Activated CD4-positive, alpha-beta T cell treated with anti-CD3 and anti-CD28 coated beads for 36 hours (primary cell): ENCODE measurements at regions of chr12 and their contacts with region 1.

Region 1: DNA sequence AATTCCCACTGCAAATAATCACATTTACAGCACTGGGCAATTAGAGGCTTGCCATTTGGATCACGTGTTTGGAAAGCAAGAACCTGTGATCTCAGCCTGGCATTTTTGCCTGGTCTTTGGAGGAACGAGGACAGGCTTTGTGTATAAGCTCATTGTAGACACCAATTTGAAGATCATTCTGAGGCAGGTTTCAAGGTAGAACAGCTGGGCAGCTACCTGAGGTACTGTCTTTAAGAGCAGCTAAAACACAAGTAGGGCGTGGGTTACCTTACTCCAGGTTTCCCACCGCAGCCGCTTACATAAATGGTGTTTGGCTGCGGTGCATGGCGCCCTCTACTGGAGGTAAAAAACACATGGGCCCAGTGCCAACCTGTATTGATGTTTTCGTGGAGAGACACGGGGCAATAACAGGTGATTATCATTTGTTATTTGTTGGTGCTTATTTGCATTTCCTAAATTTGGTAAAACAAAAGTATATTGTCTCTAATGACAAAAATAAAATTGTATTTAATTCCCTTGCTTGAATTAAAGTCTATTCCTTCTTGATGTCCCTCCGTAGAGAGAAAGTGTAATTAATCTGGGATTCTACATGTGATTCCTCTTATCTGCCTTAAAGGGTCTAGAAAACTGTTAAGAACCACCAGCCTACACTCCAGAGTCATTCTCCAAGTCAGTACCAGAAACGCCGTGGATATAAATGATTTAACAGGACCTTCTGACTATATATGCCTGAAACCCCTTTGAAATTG is 69.7 kb downstream of the SVOP start:
- DNase-seq: peak; percentile 83
- ATAC-seq: peak; percentile 84
- H3K4me3 Mint-ChIP-seq: no peak overlapping the region
- H3K27ac Mint-ChIP-seq: no peak overlapping the region
- H3K4me1 Mint-ChIP-seq: peaks cover 2% of the 10 kb centered on the region
- H3K27me3 Mint-ChIP-seq: peaks cover 8% of the 10 kb centered on the region

Region 2: DNA sequence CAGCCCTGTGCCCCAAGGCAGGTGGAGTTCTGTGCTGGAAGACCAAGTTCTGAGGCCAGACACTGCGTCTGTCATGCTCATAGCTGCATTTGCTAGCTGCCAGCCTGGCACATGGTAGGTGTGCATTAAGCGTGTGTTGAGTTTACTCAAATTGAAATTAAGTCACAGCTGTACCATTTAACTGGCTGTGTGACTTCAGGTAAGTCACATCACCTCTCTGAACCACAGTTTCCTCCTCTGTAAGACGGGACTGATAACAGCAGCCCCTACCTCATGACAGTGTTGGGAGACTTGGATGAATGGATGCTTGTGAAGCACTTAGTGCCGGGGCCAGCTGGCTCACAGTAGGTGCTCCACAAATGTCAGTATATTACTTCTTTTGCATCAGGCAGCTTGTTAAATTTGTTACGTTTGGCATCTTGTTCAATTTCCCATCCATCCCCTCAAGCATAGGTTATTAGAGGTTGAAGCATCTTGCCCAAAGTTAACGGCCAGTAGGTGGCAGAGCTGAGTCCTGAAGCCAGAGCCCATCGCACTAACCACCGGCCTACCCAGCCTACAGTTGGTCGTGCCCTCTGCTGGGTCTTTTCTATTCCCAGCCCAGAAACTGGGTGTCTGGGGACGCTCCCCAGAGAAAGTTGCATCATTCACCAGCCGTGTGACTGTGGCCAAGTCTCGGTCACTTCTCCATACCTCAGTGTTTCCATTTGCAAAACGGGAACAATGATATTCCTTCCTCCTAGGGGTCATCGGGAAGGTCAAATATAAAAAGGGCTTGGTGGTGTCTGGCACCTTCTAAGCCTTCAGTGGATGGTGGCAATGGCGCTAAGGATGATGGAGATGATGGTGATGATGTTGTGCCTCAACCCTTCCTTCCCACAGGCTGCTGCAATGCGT is 66.8 kb before region 1 on chr12:
- CTCF ChIA-PET with region 1: interaction called, 19 read pairs
- POLR2A ChIA-PET with region 1: no interaction called
- intact Hi-C with region 1: loop called (anchors 1 to 2 kb)
- DNase-seq: peak; percentile 86
- ATAC-seq: peak; percentile 88
- H3K4me3 Mint-ChIP-seq: no peak overlapping the region
- H3K27ac Mint-ChIP-seq: no peak overlapping the region
- H3K4me1 Mint-ChIP-seq: no peaks in the 10 kb centered on the region
- H3K27me3 Mint-ChIP-seq: no peaks in the 10 kb centered on the region

Region 3: DNA sequence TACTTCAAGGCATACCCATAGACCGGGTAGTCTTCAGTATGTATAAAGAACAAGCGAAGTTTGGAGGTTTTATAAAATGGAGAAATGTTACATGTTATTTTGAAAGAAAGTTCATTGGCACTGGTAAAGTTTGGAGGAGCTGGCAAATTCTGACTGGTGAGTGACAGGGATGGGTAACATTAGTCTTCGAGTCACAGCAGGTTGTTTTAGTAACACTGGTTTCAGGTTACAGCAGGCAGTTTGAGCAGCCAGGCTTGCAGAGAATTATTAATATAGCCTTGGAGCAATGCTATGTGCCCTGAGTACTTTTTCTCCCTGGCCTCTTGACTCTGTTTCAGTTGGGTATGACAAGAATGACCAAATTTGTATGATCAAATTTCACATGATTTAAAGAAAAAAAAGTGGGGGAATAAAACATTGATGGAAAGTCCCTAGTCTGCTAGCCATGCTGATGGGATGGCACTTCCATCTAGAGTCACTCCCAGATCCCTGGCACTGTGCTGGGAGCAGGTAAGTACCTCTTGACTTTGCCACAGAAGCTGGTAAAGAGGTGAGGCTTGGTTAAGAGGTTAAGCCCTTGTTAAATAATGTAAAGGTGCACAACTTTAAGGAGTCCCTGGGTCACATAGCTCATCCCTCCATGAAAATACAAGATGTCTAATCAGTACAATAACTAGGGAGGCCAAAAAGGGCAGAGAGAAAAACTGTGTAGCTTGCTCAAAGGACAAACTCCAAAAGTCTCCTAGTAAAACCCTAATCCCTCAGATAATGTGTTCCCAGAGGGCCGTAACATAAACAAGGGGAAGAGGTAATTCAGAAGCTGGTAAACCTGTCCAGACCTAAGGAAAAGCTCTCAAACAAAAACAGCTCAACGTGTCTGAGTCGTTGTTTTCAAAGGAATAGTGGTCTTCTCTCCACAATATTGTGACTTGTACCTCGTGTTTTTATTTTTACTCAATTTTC is 82.3 kb after region 1 on chr12:
- CTCF ChIA-PET with region 1: no interaction called
- POLR2A ChIA-PET with region 1: no interaction called
- intact Hi-C with region 1: no loop called
- DNase-seq: no peak
- ATAC-seq: no peak
- H3K4me3 Mint-ChIP-seq: no peak overlapping the region
- H3K27ac Mint-ChIP-seq: no peak overlapping the region
- H3K4me1 Mint-ChIP-seq: no peaks in the 10 kb centered on the region
- H3K27me3 Mint-ChIP-seq: peaks cover 15% of the 10 kb centered on the region